PC-3 (cell line): ENCODE measurements at regions of chr17 and their contacts with region 1.

Region 1: GRCh38 chr17:65988081-65988850 is 203.7 kb downstream of the CEP112 start:
- DNase-seq: peak; percentile 90
- ATAC-seq: peak; percentile 94
- H3K4me3 ChIP-seq: no peak overlapping the region
- H3K27ac ChIP-seq: no peak overlapping the region
- H3K4me1 ChIP-seq: 0 out of 2 replicates have a peak, but pooled peaks cover 4% of the 10 kb centered on the region
- H3K27me3 ChIP-seq: no peaks in the 10 kb centered on the region
- CTCF ChIP-seq: peak; percentile 98

Region 2: DNA sequence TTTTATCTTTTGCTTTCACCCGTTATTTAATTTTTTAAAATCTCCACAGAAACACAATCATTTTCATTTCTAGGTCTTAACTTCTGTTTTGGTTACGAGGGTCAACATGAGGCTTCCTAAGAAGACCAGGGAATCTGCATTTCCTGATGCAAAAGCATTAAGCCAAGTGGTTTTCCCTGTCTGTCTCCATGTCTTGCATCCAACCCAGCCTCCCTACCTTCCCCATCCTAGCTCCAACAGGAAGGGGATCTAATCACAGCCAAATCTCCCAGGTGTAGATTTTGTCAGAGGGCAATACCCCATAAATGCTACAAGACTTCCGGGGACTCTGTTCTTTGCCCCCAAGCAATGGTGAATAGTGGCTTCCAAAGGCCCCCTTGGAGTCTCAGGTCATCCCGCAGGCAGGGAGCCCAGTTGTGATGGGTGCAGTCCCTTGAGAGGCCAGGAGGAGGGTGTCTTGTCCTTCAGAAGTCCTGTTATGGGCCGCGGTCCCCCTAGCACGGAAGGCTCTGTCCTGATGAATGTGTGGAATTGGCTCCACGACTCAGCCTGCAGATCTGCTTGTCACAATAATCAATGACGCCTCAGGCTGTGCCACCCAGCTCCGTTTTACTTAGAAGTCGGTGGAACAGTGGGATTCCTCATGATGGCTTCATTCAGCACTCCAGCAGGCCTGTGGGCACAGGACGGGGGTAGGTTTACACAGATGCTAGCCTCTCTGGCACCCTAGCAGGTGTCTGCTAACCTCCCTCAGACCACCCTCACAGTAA is 710.0 kb before region 1 on chr17:
- CTCF ChIA-PET with region 1: no interaction called
- POLR2A ChIA-PET with region 1: no interaction called
- intact Hi-C with region 1: loop called (anchors 1 kb)
- DNase-seq: peak; percentile 79
- ATAC-seq: peak; percentile 96
- H3K4me3 ChIP-seq: no peak overlapping the region
- H3K27ac ChIP-seq: no peak overlapping the region
- H3K4me1 ChIP-seq: peaks cover 7% of the 10 kb centered on the region; the same call in 1 of the 2 replicates
- H3K27me3 ChIP-seq: no peaks in the 10 kb centered on the region
- CTCF ChIP-seq: peak; percentile 95

Region 3: DNA sequence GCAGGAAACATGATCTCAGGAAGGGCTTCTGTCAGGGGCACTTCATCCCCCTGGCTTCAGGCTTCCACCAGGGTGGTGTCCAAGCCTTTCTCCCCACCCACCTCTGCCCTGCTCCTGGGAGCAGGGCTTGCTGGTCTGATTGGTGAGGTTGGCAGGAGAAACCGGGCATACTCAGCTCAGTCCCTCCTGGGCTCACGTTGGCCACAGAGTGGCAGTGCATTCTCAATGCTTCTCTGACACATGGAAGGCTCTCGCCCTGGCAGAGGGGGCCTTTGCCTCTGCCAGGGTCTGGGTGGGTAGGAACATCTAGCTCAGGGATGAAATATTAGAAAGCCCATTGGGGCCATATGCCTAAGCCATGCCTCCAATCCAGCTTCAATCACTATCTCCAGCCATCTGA is 569.6 kb before region 1 on chr17:
- CTCF ChIA-PET with region 1: no interaction called
- POLR2A ChIA-PET with region 1: no interaction called
- intact Hi-C with region 1: loop called (anchors 1 kb)
- DNase-seq: peak; percentile 20
- ATAC-seq: peak; percentile 76
- H3K4me3 ChIP-seq: no peak overlapping the region
- H3K27ac ChIP-seq: no peak overlapping the region
- H3K4me1 ChIP-seq: no peaks in the 10 kb centered on the region
- H3K27me3 ChIP-seq: no peaks in the 10 kb centered on the region
- CTCF ChIP-seq: peak; percentile 43; the same call in 1 of the 2 replicates

Region 4: GRCh38 chr17:65556014-65556909 is 432.0 kb before region 1 on chr17:
- CTCF ChIA-PET with region 1: no interaction called
- POLR2A ChIA-PET with region 1: no interaction called
- intact Hi-C with region 1: loop called (anchors 5 kb)
- DNase-seq: peak; percentile 80
- ATAC-seq: peak; percentile 9; the same call in 1 of the 2 replicates
- H3K4me3 ChIP-seq: no peak overlapping the region
- H3K27ac ChIP-seq: no peak overlapping the region
- H3K4me1 ChIP-seq: 0 out of 2 replicates have a peak, but pooled peaks cover 3% of the 10 kb centered on the region
- H3K27me3 ChIP-seq: peaks cover 10% of the 10 kb centered on the region
- CTCF ChIP-seq: peak; percentile 96

Region 5: GRCh38 chr17:65742403-65743307 is 245.6 kb before region 1 on chr17:
- CTCF ChIA-PET with region 1: no interaction called
- POLR2A ChIA-PET with region 1: no interaction called
- intact Hi-C with region 1: loop called (anchors 2 kb)
- DNase-seq: peak; percentile 95
- ATAC-seq: peak; percentile 99
- H3K4me3 ChIP-seq: peak overlapping the region; percentile 22
- H3K27ac ChIP-seq: peak overlapping the region; percentile 61
- H3K4me1 ChIP-seq: peaks cover 18% of the 10 kb centered on the region
- H3K27me3 ChIP-seq: no peaks in the 10 kb centered on the region
- CTCF ChIP-seq: no peak

Region 6: DNA sequence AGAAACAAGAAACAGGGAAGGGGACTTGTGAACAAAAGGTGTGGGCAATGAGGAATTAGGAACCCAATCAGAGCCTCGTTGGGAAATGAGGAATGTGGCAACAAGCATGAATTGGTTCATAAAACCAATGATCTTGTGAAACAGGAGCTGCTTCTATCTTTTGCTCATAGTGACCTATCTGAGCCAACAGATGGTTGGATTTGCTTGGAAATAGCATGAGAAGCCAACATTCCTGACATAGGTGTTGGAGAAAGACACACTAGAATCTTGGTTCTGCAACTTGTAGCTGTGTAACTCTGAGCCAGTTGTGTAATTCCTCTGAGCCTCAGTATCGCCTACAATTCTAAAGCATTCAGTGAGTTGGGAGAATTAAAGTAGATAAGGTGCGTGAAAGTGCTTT is 175.0 kb before region 1 on chr17:
- CTCF ChIA-PET with region 1: no interaction called
- POLR2A ChIA-PET with region 1: no interaction called
- intact Hi-C with region 1: loop called (anchors 1 kb)
- DNase-seq: no peak
- ATAC-seq: no peak
- H3K4me3 ChIP-seq: no peak overlapping the region
- H3K27ac ChIP-seq: no peak overlapping the region
- H3K4me1 ChIP-seq: no peaks in the 10 kb centered on the region
- H3K27me3 ChIP-seq: no peaks in the 10 kb centered on the region
- CTCF ChIP-seq: no peak

Region 7: DNA sequence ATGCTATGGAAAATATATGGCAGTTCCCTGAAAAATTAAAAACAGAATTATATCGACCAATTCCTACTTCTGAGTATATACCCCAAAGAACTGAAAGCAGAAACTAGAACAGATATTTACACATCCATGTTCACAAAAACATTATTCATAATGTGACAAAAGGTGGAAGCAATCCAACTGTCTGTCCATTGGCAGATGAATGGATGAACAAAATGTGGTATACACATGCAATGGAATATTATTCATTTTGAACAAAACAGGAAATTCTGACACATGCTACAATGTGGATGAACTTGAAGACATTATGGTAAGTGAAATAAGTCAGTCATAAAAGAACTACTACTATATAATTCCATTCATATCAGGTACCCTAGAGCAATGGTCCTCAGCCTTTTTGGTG is 163.4 kb before region 1 on chr17:
- CTCF ChIA-PET with region 1: no interaction called
- POLR2A ChIA-PET with region 1: no interaction called
- intact Hi-C with region 1: no loop called
- DNase-seq: no peak
- ATAC-seq: no peak
- H3K4me3 ChIP-seq: no peak overlapping the region
- H3K27ac ChIP-seq: no peak overlapping the region
- H3K4me1 ChIP-seq: peaks cover 45% of the 10 kb centered on the region
- H3K27me3 ChIP-seq: no peaks in the 10 kb centered on the region
- CTCF ChIP-seq: no peak

Region 8: GRCh38 chr17:66165513-66166123 is 177.4 kb after region 1 on chr17:
- CTCF ChIA-PET with region 1: interaction called, 3 read pairs
- POLR2A ChIA-PET with region 1: no interaction called
- intact Hi-C with region 1: loop called (anchors 1 kb)
- DNase-seq: peak; percentile 83
- ATAC-seq: peak; percentile 59
- H3K4me3 ChIP-seq: no peak overlapping the region
- H3K27ac ChIP-seq: no peak overlapping the region
- H3K4me1 ChIP-seq: no peaks in the 10 kb centered on the region
- H3K27me3 ChIP-seq: no peaks in the 10 kb centered on the region
- CTCF ChIP-seq: peak; percentile 95